Activated T-helper 1 cell treated with anti-CD3 and anti-CD28 coated beads, Interleukin-12 subunit alpha, Interleukin-12 subunit beta, Interleukin-2, Interleukin-4 antibody, amounts not matched to agents 30 ng/mL and 10 ng/mL and 1 ng/mL, durations not matched to agents 14 hours and 24 hours and 36 hours (primary cell): ENCODE measurements at regions of chr2 and their contacts with region 1.

Region 1: DNA sequence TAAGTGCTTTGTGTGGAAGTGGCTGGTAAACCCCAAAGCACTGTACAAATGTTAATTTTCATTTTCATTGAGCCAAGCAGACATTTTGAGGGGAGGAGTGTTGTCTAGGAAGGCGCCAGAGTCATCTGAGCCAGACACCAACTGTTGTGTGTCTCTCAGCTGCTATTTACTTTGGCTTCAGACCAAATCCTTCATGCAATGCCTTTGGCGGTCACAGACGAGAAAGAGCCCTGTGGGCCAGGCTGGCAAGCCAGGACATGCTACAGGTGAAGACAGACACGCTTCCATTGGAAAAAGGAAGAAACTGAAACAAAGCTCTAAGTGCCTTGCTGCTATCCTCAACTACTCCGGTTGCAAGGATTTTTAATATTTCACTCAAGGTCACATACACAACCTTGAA is 115.4 kb upstream of the CDC42EP3 start:
- DNase-seq: no peak
- H3K4me3 Mint-ChIP-seq: no peak overlapping the region
- H3K27ac Mint-ChIP-seq: no peak overlapping the region
- H3K4me1 Mint-ChIP-seq: no peaks in the 10 kb centered on the region
- H3K27me3 Mint-ChIP-seq: peaks cover 2% of the 10 kb centered on the region

Region 2: GRCh38 chr2:37819186-37819585 is 32.3 kb after region 1 on chr2:
- intact Hi-C with region 1: loop called (anchors 1 kb)
- DNase-seq: no peak
- H3K4me3 Mint-ChIP-seq: no peak overlapping the region
- H3K27ac Mint-ChIP-seq: no peak overlapping the region
- H3K4me1 Mint-ChIP-seq: peaks cover 9% of the 10 kb centered on the region
- H3K27me3 Mint-ChIP-seq: no peaks in the 10 kb centered on the region

Region 3: GRCh38 chr2:38602732-38603401 is 816.0 kb after region 1 on chr2 and contains the start of gene HNRNPLL:
- intact Hi-C with region 1: no loop called
- DNase-seq: peak; percentile 94
- H3K4me3 Mint-ChIP-seq: peak within 1 kb of the TSS; percentile 91
- H3K27ac Mint-ChIP-seq: peak within 1 kb of the TSS; percentile 92
- H3K4me1 Mint-ChIP-seq: peaks cover 54% of the 10 kb centered on the region
- H3K27me3 Mint-ChIP-seq: no peaks in the 10 kb centered on the region
- total RNA-seq, gene HNRNPLL: 85.8 and 91.5 TPM in 2 replicates